CD4-positive, alpha-beta T cell (primary cell): ENCODE measurements at regions of chr16 and their contacts with region 1.

Region 1: GRCh38 chr16:1991948-1992703 is 2.4 kb downstream of the SYNGR3 start:
- DNase-seq: peak; percentile 95 to 100 (median 98)
- ATAC-seq: peak; percentile 86
- H3K4me3 ChIP-seq: peak overlapping the region; percentile 55
- H3K4me3 Mint-ChIP-seq: peak overlapping the region; percentile 65
- H3K27ac ChIP-seq: peak overlapping the region in 1 of 2 donors; percentile 56
- H3K27ac Mint-ChIP-seq: peak overlapping the region; percentile 79
- H3K4me1 ChIP-seq: peaks cover 26% of the 10 kb centered on the region
- H3K4me1 Mint-ChIP-seq: peaks cover 26% of the 10 kb centered on the region
- H3K27me3 ChIP-seq: peaks cover 13 to 15% of the 10 kb centered on the region in 2 experiments
- H3K27me3 Mint-ChIP-seq: peaks cover 20% of the 10 kb centered on the region
- CTCF ChIP-seq: no peak

Region 2: DNA sequence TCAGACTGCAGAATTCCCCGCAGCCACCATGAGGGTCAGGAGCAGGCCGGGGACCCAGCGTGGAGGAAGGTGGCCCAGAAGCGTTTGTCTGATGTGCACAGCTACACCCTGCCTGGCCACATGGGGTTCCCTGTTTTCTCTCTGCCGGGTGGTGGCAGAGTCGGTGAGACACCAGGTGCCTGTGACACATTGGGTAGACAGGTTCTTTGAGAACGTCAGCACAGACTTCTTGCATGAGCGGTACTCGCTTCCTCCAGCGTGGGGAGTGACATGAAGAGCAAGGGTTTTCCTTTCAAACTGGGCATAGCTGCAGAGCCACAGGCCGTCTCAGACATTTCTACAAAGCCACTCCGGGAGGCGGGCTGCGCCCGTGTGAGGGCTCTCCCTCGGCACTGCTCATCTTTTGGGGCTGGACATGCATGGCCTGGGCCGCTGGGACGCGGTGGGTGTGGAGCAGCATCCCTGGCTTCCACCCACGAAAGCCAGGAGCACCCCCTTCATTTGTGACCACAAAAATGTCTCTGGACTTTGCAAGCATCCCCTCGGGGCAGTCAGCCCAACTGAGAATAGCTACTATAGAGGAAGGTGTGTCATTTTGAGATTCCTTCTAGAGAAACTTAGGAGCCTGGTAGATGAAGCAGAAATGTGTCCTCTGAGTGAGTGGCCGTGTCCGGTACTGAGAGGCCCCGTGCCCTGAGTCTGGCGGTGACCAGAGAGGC is 246.8 kb before region 1 on chr16:
- CTCF ChIA-PET with region 1: no interaction called
- POLR2A ChIA-PET with region 1: no interaction called
- intact Hi-C with region 1: no loop called
- DNase-seq: no peak
- ATAC-seq: no peak
- H3K4me3 ChIP-seq: no peak overlapping the region
- H3K4me3 Mint-ChIP-seq: no peak overlapping the region
- H3K27ac ChIP-seq: no peak overlapping the region
- H3K27ac Mint-ChIP-seq: no peak overlapping the region
- H3K4me1 ChIP-seq: peaks cover 9% of the 10 kb centered on the region
- H3K4me1 Mint-ChIP-seq: no peaks in the 10 kb centered on the region
- H3K27me3 ChIP-seq: no peaks in the 10 kb centered on the region
- H3K27me3 Mint-ChIP-seq: no peaks in the 10 kb centered on the region
- CTCF ChIP-seq: no peak

Region 3: DNA sequence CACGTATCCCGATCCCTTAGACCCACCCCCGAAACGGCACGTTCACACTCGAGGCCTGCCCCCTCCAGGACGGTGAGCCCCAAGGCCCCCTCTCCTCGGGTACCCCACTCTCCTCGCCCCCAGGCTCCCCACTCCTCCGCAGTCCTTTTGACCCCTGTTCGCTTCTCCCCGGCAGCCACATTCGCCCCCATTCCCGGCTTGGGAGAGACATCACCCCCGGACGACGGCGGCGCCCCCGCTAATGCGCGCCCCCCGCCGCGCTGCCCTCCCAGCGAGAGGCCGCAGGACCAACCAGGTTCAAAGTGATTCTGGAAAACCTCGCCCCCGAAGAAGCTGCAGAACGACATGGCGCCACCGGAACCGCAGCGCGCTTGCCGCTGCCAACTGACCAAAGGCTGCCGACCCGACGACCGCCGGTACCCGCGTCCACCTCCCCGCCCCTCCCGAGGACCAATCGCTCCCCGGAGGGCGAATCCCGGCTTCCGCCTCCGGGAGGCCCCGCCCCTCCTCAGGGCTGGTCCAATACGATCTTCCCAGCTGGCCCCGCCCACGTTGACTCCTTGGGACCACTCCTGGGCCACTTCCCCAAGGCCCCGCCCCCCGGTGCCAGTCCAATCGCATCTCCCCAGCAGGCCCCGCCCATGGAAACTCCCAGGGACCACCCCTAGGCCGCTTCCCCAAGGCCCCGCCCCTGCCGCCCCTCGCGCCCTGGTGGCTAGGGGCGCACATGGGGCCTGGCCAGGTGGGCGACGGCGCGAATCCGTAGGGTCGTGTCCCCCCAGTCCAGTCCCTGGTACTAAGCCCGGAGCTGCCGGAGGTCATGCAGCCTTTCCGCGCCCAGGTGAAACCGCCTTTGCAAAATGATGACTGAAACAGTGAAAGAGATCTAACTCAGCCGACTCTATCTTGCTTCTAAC is 49.1 kb before region 1 on chr16 and contains the start of gene MSRB1:
- CTCF ChIA-PET with region 1: no interaction called
- POLR2A ChIA-PET with region 1: interaction called, 3 read pairs
- intact Hi-C with region 1: loop called in 1 of 2 experiments (anchors 5 kb)
- DNase-seq: peak; percentile 97 to 100 (median 99)
- ATAC-seq: peak; percentile 99
- H3K4me3 ChIP-seq: peak within 1 kb of the TSS; percentile 92
- H3K4me3 Mint-ChIP-seq: peak within 1 kb of the TSS; percentile 93
- H3K27ac ChIP-seq: peak within 1 kb of the TSS; percentile 40 to 43
- H3K27ac Mint-ChIP-seq: peak within 1 kb of the TSS; percentile 47
- H3K4me1 ChIP-seq: peaks cover 28% of the 10 kb centered on the region
- H3K4me1 Mint-ChIP-seq: peaks cover 18% of the 10 kb centered on the region
- H3K27me3 ChIP-seq: no peaks in the 10 kb centered on the region
- H3K27me3 Mint-ChIP-seq: no peaks in the 10 kb centered on the region
- CTCF ChIP-seq: no peak
- total RNA-seq, gene MSRB1: 2.3 to 2.4 TPM

Region 4: DNA sequence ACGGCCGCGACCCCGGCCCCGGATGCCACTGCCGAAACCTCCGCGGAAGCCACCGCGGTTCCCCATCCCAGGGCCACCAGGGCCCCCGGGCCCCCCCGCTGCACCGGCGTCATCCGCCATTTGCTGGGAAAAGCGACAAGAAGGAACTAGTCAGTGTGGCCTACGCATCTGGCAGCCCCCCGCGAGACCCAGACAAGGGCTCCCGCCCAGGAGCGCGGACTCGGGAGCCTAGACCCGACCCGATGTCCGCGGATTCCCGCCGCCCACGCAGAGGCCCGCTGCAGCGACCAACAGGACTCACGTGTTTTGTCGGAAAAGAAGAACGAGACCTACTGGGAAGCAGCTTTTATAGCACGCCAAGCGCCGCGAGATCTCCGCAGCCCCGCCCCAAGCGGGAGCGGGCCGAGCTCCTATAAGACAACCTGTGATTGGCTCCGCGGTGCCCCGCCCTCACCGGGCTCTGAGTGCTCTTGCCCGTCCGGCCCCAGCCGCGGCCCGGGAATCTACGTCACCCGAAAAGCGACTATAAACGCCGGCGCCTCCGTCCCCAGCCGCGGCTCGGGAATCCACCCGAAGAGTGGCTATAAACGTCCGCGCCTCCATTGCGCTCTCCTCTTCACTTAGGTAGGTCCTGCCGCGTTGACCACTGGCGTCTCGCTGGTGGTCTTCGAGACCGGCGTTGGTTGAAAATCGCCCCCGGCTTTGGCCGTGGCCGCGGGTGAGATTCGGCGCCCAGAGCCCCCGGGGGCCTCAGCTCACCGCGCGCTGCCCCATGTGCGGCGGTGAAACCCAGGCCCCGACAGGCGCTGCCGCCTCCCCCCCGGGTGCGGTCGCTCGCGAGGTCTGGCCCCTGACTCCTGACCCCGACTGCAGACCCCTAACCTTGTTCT is 27.4 kb before region 1 on chr16 and contains the start of gene RPS2:
- CTCF ChIA-PET with region 1: no interaction called
- POLR2A ChIA-PET with region 1: interaction called, 55 read pairs
- intact Hi-C with region 1: no loop called
- DNase-seq: peak; percentile 96 to 100 (median 98)
- ATAC-seq: peak; percentile 89
- H3K4me3 ChIP-seq: peak within 1 kb of the TSS; percentile 91
- H3K4me3 Mint-ChIP-seq: peak within 1 kb of the TSS; percentile 98
- H3K27ac ChIP-seq: peak within 1 kb of the TSS; percentile 96 to 99
- H3K27ac Mint-ChIP-seq: peak within 1 kb of the TSS; percentile 98
- H3K4me1 ChIP-seq: peaks cover 58% of the 10 kb centered on the region
- H3K4me1 Mint-ChIP-seq: peaks cover 50% of the 10 kb centered on the region
- H3K27me3 ChIP-seq: no peaks in the 10 kb centered on the region
- H3K27me3 Mint-ChIP-seq: no peaks in the 10 kb centered on the region
- CTCF ChIP-seq: no peak
- total RNA-seq, gene RPS2: 3,604 to 3,755 TPM

Region 5: DNA sequence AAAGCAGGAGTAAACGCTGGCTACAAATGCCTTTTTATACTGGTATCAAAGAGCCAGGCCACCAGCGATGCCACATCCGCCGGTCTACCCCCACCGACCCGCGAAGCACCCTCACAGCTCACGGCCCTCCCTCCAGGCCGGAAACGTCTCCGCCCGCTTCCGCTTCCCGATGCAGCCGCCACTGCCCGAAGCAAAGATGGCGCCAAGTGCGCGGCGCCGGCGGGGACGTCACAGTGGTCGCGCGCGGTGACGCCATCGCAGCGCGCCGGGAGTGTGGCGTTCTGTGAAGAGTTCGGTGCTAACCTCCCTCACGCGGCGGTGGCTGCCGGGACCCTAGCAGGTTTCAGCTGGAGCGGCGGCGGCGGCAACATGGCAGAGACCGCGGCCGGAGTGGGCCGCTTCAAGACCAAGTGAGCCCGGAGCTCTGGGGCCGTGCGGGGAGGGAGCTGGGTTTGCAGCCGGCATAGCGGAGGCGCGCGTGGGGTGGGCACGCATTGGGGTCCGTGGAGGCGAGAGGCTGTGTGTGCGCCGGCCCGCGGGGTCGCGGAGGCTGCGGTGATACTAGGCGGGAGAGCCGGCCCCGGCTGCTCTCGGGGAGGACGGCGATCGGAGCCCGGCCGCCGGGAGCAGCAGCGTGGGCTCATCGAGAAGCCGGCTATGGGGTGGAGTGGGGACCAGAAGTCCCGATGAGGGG is 20.2 kb before region 1 on chr16 and contains the start of gene TBL3:
- CTCF ChIA-PET with region 1: no interaction called
- POLR2A ChIA-PET with region 1: interaction called, 21 read pairs
- intact Hi-C with region 1: loop called in 1 of 2 experiments (anchors 1 kb)
- DNase-seq: peak; percentile 92 to 98 (median 96)
- ATAC-seq: peak; percentile 97
- H3K4me3 ChIP-seq: peak within 1 kb of the TSS; percentile 73
- H3K4me3 Mint-ChIP-seq: peak within 1 kb of the TSS; percentile 97
- H3K27ac ChIP-seq: peak within 1 kb of the TSS; percentile 87 to 92
- H3K27ac Mint-ChIP-seq: peak within 1 kb of the TSS; percentile 97
- H3K4me1 ChIP-seq: peaks cover 36% of the 10 kb centered on the region
- H3K4me1 Mint-ChIP-seq: peaks cover 20% of the 10 kb centered on the region
- H3K27me3 ChIP-seq: no peaks in the 10 kb centered on the region
- H3K27me3 Mint-ChIP-seq: no peaks in the 10 kb centered on the region
- CTCF ChIP-seq: no peak
- total RNA-seq, gene TBL3: 12.7 to 15.5 TPM

Region 6: GRCh38 chr16:2003827-2004641 is 11.9 kb after region 1 on chr16:
- CTCF ChIA-PET with region 1: interaction called, 17 read pairs
- POLR2A ChIA-PET with region 1: interaction called, 4 read pairs
- intact Hi-C with region 1: loop called in 1 of 2 experiments (anchors 1 kb)
- DNase-seq: peak; percentile 78 to 92 (median 84)
- ATAC-seq: peak; percentile 98
- H3K4me3 ChIP-seq: no peak overlapping the region
- H3K4me3 Mint-ChIP-seq: no peak overlapping the region
- H3K27ac ChIP-seq: no peak overlapping the region
- H3K27ac Mint-ChIP-seq: no peak overlapping the region
- H3K4me1 ChIP-seq: peaks cover 57% of the 10 kb centered on the region
- H3K4me1 Mint-ChIP-seq: peaks cover 32% of the 10 kb centered on the region
- H3K27me3 ChIP-seq: no peaks in the 10 kb centered on the region
- H3K27me3 Mint-ChIP-seq: no peaks in the 10 kb centered on the region
- CTCF ChIP-seq: peak; percentile 78

Region 7: DNA sequence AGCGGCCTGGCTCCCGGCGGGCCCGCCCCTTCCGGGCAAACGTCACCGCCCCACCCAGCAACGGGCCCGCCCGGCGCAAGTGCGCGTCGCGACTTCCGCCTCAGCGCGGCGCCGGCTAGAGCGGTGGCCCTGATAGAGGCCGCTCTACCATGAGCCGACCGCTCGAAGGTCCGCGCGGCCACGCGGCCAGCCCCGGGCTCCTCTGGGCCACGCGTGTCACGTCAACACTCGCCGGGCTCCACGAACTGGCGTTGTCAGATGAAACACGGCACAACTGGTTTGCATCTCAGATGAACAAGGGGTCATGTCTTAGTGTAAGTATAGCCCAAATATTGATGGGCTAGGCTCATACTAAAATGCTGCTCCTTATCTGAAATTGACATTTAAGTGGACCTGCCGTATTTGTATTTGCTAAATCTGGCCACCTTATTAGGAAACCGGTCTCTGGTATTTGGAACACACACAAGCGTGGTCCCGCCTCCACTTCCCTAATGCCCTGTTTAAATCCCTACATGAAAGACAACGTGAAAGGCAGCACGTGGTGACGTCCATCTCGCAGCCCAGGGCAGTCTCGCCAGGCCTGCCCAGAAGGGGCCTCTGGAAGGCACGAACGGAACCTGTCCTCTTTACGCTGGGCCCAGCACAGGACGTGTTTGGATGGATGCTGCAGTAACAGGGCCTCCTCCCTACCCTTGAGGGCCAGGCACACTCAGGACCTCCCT is 17.8 kb after region 1 on chr16 and contains the start of gene ZNF598:
- CTCF ChIA-PET with region 1: no interaction called
- POLR2A ChIA-PET with region 1: interaction called, 4 read pairs
- intact Hi-C with region 1: loop called in 1 of 2 experiments (anchors 1 kb)
- DNase-seq: peak; percentile 47 to 93 (median 75)
- ATAC-seq: peak; percentile 91
- H3K4me3 ChIP-seq: peak within 1 kb of the TSS; percentile 68
- H3K4me3 Mint-ChIP-seq: peak within 1 kb of the TSS; percentile 93
- H3K27ac ChIP-seq: peak within 1 kb of the TSS; percentile 78 to 89
- H3K27ac Mint-ChIP-seq: peak within 1 kb of the TSS; percentile 92
- H3K4me1 ChIP-seq: peaks cover 52% of the 10 kb centered on the region
- H3K4me1 Mint-ChIP-seq: peaks cover 40% of the 10 kb centered on the region
- H3K27me3 ChIP-seq: no peaks in the 10 kb centered on the region
- H3K27me3 Mint-ChIP-seq: no peaks in the 10 kb centered on the region
- CTCF ChIP-seq: no peak
- total RNA-seq, gene ZNF598: 39.7 to 43.6 TPM